K562 (cell line): ENCODE measurements at regions of chr14 and their contacts with region 1.

Region 1: GRCh38 chr14:58072288-58073071 is 79.5 kb downstream of the ARMH4 start:
- DNase-seq: peak; percentile 45 to 69 (median 50)
- ATAC-seq: peak; percentile 91
- H3K4me3 ChIP-seq: no peak overlapping the region
- H3K27ac ChIP-seq: no peak overlapping the region
- H3K4me1 ChIP-seq: no peaks in the 10 kb centered on the region
- H3K27me3 ChIP-seq: no peaks in the 10 kb centered on the region; a peak in 1 of 5 replicates
- CTCF ChIP-seq: peak; percentile 63 to 75 (median 67)
- EP300 ChIP-seq: no peak
- POLR2A ChIP-seq: no peak
- RAD21 ChIP-seq: peak; percentile 33 to 60; a peak in 3 of 4 replicates

Region 2: DNA sequence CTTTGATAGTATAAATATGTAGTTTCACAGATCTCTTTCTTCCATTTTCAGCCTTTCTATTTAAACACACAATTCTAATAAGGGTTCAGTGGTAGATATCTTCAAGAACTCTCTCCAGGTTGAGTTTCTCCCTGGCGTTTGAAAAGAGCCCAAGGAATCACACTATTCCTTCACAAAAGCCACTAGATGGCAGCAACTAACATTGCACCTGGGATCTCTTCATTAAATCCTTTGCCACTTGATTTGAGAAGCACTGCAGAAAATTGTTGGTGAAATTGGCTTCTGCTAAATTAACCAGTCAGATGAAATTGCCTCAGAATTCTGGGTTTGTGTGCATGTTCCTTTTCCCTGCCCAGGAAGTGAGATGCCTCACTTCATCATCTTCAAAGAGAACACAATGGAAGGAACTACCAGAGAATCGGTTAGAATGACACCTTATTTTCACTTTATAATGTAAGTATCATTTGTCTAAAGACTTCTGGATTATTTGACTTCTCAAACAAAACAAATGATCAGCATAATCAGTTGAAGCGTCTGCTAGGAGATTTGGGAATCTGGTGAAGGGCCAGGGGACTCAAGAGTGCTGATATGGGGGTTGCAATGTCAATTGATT is 585.6 kb before region 1 on chr14:
- CTCF ChIA-PET with region 1: interaction called, 5 read pairs
- POLR2A ChIA-PET with region 1: no interaction called
- in situ Hi-C with region 1: no loop called
- intact Hi-C with region 1: loop called (anchors 1 kb)
- DNase-seq: peak; percentile 5 to 20 (median 12)
- ATAC-seq: no peak
- H3K4me3 ChIP-seq: no peak overlapping the region
- H3K27ac ChIP-seq: no peak overlapping the region
- H3K4me1 ChIP-seq: no peaks in the 10 kb centered on the region
- H3K27me3 ChIP-seq: no peaks in the 10 kb centered on the region
- CTCF ChIP-seq: peak; percentile 30 to 52 (median 46); a peak in 4 of 6 replicates
- EP300 ChIP-seq: no peak
- POLR2A ChIP-seq: no peak
- RAD21 ChIP-seq: peak; percentile 34 to 46

Region 3: GRCh38 chr14:57533214-57533613 is 539.3 kb before region 1 on chr14:
- CTCF ChIA-PET with region 1: no interaction called
- POLR2A ChIA-PET with region 1: no interaction called
- in situ Hi-C with region 1: no loop called
- intact Hi-C with region 1: loop called (anchors 1 kb)
- DNase-seq: peak in 3 of 4 experiments; percentile 10 to 21 (median 12)
- ATAC-seq: no peak
- H3K4me3 ChIP-seq: no peak overlapping the region
- H3K27ac ChIP-seq: no peak overlapping the region
- H3K4me1 ChIP-seq: no peaks in the 10 kb centered on the region
- H3K27me3 ChIP-seq: no peaks in the 10 kb centered on the region
- CTCF ChIP-seq: peak in 2 of 3 experiments; percentile 17 to 44; a peak in 3 of 6 replicates
- EP300 ChIP-seq: no peak
- POLR2A ChIP-seq: no peak
- RAD21 ChIP-seq: peak in 1 of 2 experiments; percentile 36; a peak in 2 of 4 replicates

Region 4: DNA sequence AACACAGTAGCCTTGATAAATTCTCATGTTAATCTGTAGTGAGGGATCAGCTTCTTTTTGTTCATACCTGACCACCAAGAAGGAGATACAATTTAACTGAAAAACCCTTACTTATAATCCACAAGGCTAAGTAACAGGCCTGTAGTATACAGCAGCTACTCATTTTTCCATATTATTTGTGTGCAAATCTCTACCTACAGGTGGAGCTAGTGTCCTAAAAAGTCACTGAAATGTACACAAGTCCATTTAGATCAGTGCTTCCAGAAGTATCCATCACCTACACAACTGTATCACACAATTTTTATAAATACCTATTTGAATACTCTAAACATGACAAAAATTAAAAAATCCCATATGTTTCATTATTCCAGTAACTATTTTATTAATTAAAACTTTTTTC is 379.8 kb before region 1 on chr14:
- CTCF ChIA-PET with region 1: interaction called, 3 read pairs
- POLR2A ChIA-PET with region 1: no interaction called
- in situ Hi-C with region 1: no loop called
- intact Hi-C with region 1: loop called (anchors 1 kb)
- DNase-seq: peak; percentile 6 to 20 (median 8)
- ATAC-seq: peak; percentile 46; the same call in 1 of the 3 replicates
- H3K4me3 ChIP-seq: no peak overlapping the region
- H3K27ac ChIP-seq: no peak overlapping the region
- H3K4me1 ChIP-seq: no peaks in the 10 kb centered on the region
- H3K27me3 ChIP-seq: no peaks in the 10 kb centered on the region
- CTCF ChIP-seq: peak in 2 of 3 experiments; percentile 18 to 37; a peak in 2 of 6 replicates
- EP300 ChIP-seq: no peak
- POLR2A ChIP-seq: no peak
- RAD21 ChIP-seq: peak in 1 of 2 experiments; percentile 37; a peak in 1 of 4 replicates

Region 5: GRCh38 chr14:58171090-58171489 is 98.6 kb after region 1 on chr14:
- CTCF ChIA-PET with region 1: no interaction called
- POLR2A ChIA-PET with region 1: no interaction called
- in situ Hi-C with region 1: no loop called
- intact Hi-C with region 1: no loop called
- DNase-seq: peak; percentile 94 to 96 (median 95)
- ATAC-seq: peak; percentile 99
- H3K4me3 ChIP-seq: no peak overlapping the region
- H3K27ac ChIP-seq: peak overlapping the region; percentile 76
- H3K4me1 ChIP-seq: peaks cover 6 to 9% of the 10 kb centered on the region in 2 experiments; a peak in 3 of 5 replicates
- H3K27me3 ChIP-seq: no peaks in the 10 kb centered on the region
- CTCF ChIP-seq: no peak
- EP300 ChIP-seq: peak; percentile 73
- POLR2A ChIP-seq: no peak
- RAD21 ChIP-seq: no peak